ENCODE measurements at regions of chr6 and their contacts with region 1.

Region 1: DNA sequence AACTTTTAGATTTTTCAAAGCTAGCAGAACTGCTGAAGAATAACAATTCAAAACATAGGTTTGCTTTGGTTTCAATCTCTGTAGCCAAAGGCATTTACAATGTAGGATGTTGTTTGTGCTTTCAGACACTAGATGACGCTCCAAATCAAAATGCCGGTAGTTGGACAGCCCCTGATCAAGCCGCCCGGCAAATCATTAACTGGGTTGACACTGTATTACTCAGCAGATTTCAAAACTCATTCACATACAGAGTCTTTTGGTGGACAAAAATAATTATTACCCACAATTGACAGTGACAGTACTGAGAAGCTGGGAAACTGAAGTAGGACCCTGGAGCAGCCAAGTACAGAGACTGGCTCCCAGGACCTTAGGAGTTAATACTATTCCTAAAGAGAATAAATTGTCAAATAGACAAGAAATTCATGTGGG is 21.3 kb upstream of the HFE start:
- DNase-seq: peak; percentile 79 to 83
- H3K4me3 ChIP-seq: no peak overlapping the region
- H3K4me3 Mint-ChIP-seq: peak overlapping the region; percentile 39
- H3K27ac Mint-ChIP-seq: peak overlapping the region; percentile 81
- H3K4me1 ChIP-seq: peaks cover 41% of the 10 kb centered on the region
- H3K4me1 Mint-ChIP-seq: peaks cover 31% of the 10 kb centered on the region
- H3K27me3 ChIP-seq: no peaks in the 10 kb centered on the region
- H3K27me3 Mint-ChIP-seq: no peaks in the 10 kb centered on the region
- CTCF ChIP-seq: peak; percentile 74 to 83

Region 2: GRCh38 chr6:26087284-26088115 is 21.5 kb after region 1 on chr6 and contains the start of gene HFE:
- CTCF ChIA-PET with region 1: interaction called, 3 read pairs
- POLR2A ChIA-PET with region 1: no interaction called
- intact Hi-C with region 1: loop called (anchors 1 kb)
- DNase-seq: peak; percentile 45 to 57
- H3K4me3 ChIP-seq: peak within 1 kb of the TSS; percentile 72
- H3K4me3 Mint-ChIP-seq: peak within 1 kb of the TSS; percentile 88
- H3K27ac Mint-ChIP-seq: peak within 1 kb of the TSS; percentile 45
- H3K4me1 ChIP-seq: no peaks in the 10 kb centered on the region
- H3K4me1 Mint-ChIP-seq: peaks cover 20% of the 10 kb centered on the region
- H3K27me3 ChIP-seq: no peaks in the 10 kb centered on the region
- H3K27me3 Mint-ChIP-seq: no peaks in the 10 kb centered on the region
- CTCF ChIP-seq: peak in 1 of 2 experiments; percentile 30
- total RNA-seq, gene HFE: 5.7 and 7.4 TPM in 2 replicates

Region 3: DNA sequence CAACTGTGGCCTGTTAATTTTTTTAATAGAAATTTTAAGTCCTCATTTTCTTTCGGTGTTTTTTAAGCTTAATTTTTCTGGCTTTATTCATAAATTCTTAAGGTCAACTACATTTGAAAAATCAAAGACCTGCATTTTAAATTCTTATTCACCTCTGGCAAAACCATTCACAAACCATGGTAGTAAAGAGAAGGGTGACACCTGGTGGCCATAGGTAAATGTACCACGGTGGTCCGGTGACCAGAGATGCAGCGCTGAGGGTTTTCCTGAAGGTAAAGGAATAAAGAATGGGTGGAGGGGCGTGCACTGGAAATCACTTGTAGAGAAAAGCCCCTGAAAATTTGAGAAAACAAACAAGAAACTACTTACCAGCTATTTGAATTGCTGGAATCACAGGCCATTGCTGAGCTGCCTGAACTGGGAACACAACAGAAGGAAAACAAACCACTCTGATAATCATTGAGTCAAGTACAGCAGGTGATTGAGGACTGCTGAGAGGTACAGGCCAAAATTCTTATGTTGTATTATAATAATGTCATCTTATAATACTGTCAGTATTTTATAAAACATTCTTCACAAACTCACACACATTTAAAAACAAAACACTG is 31.4 kb after region 1 on chr6:
- CTCF ChIA-PET with region 1: interaction called, 4 read pairs
- POLR2A ChIA-PET with region 1: interaction called, 3 read pairs
- intact Hi-C with region 1: loop called (anchors 1 kb)
- DNase-seq: peak; percentile 67 to 73
- H3K4me3 ChIP-seq: no peak overlapping the region
- H3K4me3 Mint-ChIP-seq: no peak overlapping the region
- H3K27ac Mint-ChIP-seq: peak overlapping the region; percentile 33
- H3K4me1 ChIP-seq: peaks cover 13% of the 10 kb centered on the region
- H3K4me1 Mint-ChIP-seq: peaks cover 8% of the 10 kb centered on the region
- H3K27me3 ChIP-seq: no peaks in the 10 kb centered on the region
- H3K27me3 Mint-ChIP-seq: no peaks in the 10 kb centered on the region
- CTCF ChIP-seq: peak; percentile 76 to 80